ENCODE measurements at regions of chr22 and their contacts with region 1.

Region 1: GRCh38 chr22:39405346-39406085 is 5.9 kb downstream of the TAB1 start:
- DNase-seq: no peak
- ATAC-seq: no peak
- H3K4me3 Mint-ChIP-seq: no peak overlapping the region
- H3K27ac Mint-ChIP-seq: no peak overlapping the region
- H3K4me1 Mint-ChIP-seq: peaks cover 20% of the 10 kb centered on the region
- H3K27me3 Mint-ChIP-seq: no peaks in the 10 kb centered on the region
- CTCF ChIP-seq: no peak

Region 2: DNA sequence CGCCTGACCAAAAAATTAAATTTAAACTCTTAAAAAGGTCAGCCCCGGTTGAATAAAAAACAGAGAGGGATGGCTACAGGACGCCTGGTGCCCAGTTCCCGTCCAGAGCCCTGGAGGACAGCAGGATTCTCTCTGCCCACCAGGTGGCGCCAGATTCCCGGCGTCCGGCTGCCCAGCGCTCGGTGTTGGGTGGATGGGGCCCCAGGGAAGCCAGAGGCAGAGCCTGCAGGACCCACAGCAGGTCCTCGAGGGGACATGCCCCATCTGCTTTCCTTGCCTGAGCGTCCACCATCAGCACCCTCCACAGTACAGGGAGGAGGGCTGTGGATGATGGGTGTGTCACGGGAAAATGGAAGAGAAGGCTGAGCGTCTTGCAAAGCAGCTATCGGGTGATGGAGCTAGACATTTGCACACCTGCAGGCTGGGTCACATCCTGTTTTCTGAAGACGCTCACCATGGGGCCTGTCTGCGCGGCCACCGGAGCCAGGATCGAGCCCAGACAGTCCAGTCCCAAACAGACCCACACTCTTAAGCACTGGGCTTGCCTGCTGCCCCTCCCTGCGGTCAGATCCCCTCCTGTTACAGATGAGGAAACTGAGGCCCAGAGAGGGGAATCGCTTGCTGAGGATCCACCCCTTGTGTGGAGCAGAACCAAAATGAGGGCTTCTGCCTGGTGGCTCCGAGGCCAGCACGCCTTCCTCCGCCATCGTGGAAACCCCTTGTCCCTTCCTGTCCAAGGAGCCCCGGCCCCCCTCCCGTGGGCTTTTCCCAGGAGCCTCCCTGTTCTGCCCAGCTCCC is 234.5 kb before region 1 on chr22:
- CTCF ChIA-PET with region 1: no interaction called
- POLR2A ChIA-PET with region 1: no interaction called
- intact Hi-C with region 1: no loop called
- DNase-seq: peak; percentile 85
- ATAC-seq: peak; percentile 83
- H3K4me3 Mint-ChIP-seq: peak overlapping the region; percentile 77
- H3K27ac Mint-ChIP-seq: peak overlapping the region; percentile 76
- H3K4me1 Mint-ChIP-seq: peaks cover 42% of the 10 kb centered on the region
- H3K27me3 Mint-ChIP-seq: no peaks in the 10 kb centered on the region
- CTCF ChIP-seq: peak; percentile 93

Region 3: DNA sequence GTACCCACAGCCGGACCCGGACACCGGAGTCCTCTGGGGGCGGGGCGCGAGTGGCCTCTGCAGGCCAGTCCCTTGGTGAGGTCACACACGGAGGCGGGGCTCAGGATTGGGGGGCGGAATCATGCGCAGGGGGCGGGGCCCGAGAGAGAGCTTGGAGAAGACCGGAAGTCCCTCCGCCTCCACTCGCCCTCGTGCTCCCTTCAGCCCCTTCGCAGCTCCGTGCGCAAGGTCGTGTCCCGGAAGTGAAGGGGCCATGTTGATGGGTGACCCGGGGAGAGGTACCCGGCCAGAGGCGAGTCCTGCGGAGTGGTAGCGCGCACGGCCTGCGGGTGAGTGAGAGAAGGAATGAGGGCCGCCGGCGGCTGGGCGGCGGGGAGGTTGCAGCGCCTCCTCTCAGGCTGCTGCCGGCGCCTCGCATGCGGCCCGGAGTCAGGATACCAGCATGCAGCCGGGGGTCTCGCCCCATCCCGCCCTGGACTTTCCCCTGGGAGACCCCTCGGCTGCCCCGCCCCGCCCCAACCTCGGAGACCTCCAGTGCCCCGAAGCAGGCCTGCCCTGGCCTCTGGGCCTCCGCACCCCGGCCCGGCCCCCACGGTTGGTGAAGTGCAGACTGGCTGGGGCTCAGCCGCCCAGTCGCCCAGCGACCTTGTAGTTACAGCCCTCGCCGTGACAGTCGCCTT is 96.7 kb after region 1 on chr22 and contains the start of gene MIEF1:
- CTCF ChIA-PET with region 1: no interaction called
- POLR2A ChIA-PET with region 1: interaction called, 20 read pairs
- intact Hi-C with region 1: no loop called
- DNase-seq: peak; percentile 89
- ATAC-seq: peak; percentile 96
- H3K4me3 Mint-ChIP-seq: peak within 1 kb of the TSS; percentile 95
- H3K27ac Mint-ChIP-seq: peak within 1 kb of the TSS; percentile 89
- H3K4me1 Mint-ChIP-seq: peaks cover 34% of the 10 kb centered on the region
- H3K27me3 Mint-ChIP-seq: no peaks in the 10 kb centered on the region
- CTCF ChIP-seq: no peak
- total RNA-seq, gene MIEF1: 38.2 and 41.3 TPM in 2 replicates

Measured in activated B cell treated with CpG ODN at 0.5 μM for 24 hours (primary cell).